Upper lobe of right lung (tissue), 1 donor: ENCODE measurements at regions of chr15 and their contacts with region 1.

Region 1: DNA sequence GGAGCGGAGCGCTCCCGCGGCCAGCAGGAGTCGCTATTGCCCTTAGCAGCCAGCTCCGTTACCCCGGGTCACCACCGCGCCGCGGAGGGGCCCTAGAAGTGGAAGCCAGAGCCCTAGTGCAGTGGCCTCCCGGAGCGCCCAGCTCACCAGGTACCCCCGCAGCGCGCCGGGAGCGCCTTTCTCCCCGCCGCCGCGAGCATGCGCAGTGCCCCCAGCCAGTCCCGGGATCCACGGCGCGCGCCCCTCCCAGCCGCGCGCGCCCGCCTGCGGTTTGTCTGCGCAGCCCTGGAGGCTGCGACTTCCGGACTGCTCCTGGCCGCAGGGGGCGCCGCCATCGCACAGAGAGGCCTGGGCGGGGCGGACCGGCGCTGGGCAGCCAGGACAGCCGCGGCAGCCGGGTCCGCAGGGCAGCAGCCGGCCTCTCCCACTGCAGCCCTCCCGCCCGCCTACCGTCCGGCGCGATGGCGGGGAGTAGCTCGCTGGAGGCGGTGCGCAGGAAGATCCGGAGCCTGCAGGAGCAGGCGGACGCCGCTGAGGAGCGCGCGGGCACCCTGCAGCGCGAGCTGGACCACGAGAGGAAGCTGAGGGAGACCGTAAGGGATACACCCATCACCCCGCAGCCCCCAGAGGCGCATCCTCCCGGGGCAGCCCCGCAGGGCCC is 5.7 kb downstream of the TPM1 start:
- DNase-seq: peak; percentile 97
- ATAC-seq: peak; percentile 95
- H3K4me3 ChIP-seq: peak overlapping the region; percentile 97
- H3K27ac ChIP-seq: peak overlapping the region; percentile 90
- H3K4me1 ChIP-seq: peaks cover 53% of the 10 kb centered on the region
- H3K27me3 ChIP-seq: peaks cover 21% of the 10 kb centered on the region
- CTCF ChIP-seq: peak; percentile 93

Region 2: DNA sequence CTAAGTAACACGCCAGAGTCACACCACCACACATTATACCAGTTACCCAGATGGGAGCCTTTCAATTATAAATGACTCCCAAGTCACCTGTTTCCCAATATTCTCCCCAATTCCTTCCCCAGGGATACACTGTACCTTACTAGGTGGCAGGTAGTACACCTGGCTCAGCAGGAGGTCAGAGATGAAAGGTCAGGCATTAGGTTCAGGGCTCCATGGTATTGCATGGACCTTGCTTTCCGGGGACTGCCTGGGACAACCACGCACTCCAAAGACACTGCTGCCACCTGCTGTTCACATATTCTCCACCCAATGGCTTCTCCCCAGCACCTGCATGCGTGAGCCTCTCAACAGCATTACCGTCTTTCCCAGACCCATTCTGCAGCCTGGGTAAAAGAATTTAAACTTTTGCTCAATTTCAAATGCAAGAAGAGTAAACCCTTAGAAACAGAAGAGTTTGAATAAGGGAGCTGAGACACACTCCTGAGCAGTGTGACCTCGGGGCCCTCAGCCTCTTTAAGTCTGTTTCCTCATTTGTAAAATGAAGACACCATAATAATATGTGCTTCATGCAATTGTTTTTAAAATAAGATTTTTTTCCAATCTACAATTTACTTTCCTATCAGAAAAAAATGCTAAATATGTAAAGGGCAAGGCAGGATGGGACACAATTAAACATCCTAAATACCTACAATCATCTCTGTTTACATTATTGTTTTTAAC is 45.4 kb after region 1 on chr15:
- intact Hi-C with region 1: loop called (anchors 5 kb)
- DNase-seq: peak; percentile 81
- ATAC-seq: peak; percentile 98
- H3K4me3 ChIP-seq: no peak overlapping the region
- H3K27ac ChIP-seq: no peak overlapping the region
- H3K4me1 ChIP-seq: peaks cover 11% of the 10 kb centered on the region
- H3K27me3 ChIP-seq: no peaks in the 10 kb centered on the region
- CTCF ChIP-seq: peak; percentile 91